Activated CD4-positive, alpha-beta T cell treated with anti-CD3 and anti-CD28 coated beads for 36 hours (primary cell): ENCODE measurements at regions of chr3 and their contacts with region 1.

Region 1: DNA sequence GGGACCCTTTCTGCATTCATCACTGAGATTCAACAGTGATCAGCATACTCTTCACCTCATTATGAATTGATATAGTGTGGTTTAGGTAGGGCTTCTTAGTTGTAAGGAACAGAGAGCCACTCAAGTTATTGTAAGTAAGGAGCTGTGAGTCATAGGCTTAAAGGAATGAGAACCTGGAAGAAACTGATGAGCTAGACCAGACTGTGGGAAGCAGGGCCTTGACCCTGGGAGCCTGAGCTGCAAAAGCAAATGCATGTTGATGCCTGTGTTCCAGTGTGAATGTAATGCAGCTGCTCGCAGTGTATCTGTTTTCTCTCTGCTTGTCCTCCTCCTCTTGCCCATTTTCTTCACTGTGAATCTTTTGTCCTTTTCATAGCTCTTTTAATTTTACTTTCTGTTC is 13.6 kb downstream of the ZKSCAN7 start:
- DNase-seq: no peak
- ATAC-seq: no peak
- H3K4me3 Mint-ChIP-seq: no peak overlapping the region
- H3K27ac Mint-ChIP-seq: no peak overlapping the region
- H3K4me1 Mint-ChIP-seq: no peaks in the 10 kb centered on the region
- H3K27me3 Mint-ChIP-seq: no peaks in the 10 kb centered on the region

Region 2: GRCh38 chr3:44554626-44555592 is 13.7 kb before region 1 on chr3 and contains the start of gene ZKSCAN7:
- CTCF ChIA-PET with region 1: no interaction called
- POLR2A ChIA-PET with region 1: interaction called, 12 read pairs
- intact Hi-C with region 1: no loop called
- DNase-seq: peak; percentile 68
- ATAC-seq: peak; percentile 65
- H3K4me3 Mint-ChIP-seq: peak within 1 kb of the TSS; percentile 88
- H3K27ac Mint-ChIP-seq: peak within 1 kb of the TSS; percentile 88
- H3K4me1 Mint-ChIP-seq: peaks cover 13% of the 10 kb centered on the region
- H3K27me3 Mint-ChIP-seq: no peaks in the 10 kb centered on the region
- total RNA-seq, gene ZKSCAN7: 2.0 TPM